Endothelial cell of umbilical vein (primary cell): ENCODE measurements at regions of chr1 and their contacts with region 1.

Region 1: GRCh38 chr1:207797229-207797961 is 45.5 kb downstream of the CD46 start:
- DNase-seq: peak; percentile 91
- H3K4me3 ChIP-seq: no peak overlapping the region
- H3K27ac ChIP-seq: peak overlapping the region; percentile 49
- H3K4me1 ChIP-seq: peaks cover 4% of the 10 kb centered on the region
- H3K27me3 ChIP-seq: no peaks in the 10 kb centered on the region
- CTCF ChIP-seq: peak; percentile 71 to 72
- POLR2A ChIP-seq: peak; percentile 40

Region 2: DNA sequence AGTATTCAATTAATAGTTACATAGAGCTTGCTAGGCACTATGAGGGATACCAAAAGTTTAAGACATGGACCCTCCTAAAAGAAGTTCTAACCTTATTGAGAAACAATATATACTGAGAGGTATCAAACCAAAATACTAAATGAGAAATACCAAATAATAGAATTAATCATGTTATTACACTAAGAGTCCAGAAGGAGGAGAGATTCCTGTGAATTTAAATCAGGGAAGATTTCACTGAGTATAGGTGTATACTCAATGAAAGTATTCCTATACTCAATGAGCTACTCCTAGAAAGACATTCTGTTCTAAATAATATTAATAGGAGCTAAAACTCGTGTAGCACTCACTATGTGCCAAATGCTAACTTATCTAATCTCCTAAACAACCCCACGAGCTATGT is 143.1 kb before region 1 on chr1:
- CTCF ChIA-PET with region 1: interaction called, 15 read pairs
- POLR2A ChIA-PET with region 1: no interaction called
- dilution Hi-C with region 1: no loop called
- intact Hi-C with region 1: loop called (anchors 2 kb)
- DNase-seq: peak; percentile 6
- H3K4me3 ChIP-seq: no peak overlapping the region
- H3K27ac ChIP-seq: no peak overlapping the region
- H3K4me1 ChIP-seq: no peaks in the 10 kb centered on the region
- H3K27me3 ChIP-seq: peaks cover 7 to 19% of the 10 kb centered on the region in 2 experiments
- CTCF ChIP-seq: no peak
- POLR2A ChIP-seq: no peak

Region 3: DNA sequence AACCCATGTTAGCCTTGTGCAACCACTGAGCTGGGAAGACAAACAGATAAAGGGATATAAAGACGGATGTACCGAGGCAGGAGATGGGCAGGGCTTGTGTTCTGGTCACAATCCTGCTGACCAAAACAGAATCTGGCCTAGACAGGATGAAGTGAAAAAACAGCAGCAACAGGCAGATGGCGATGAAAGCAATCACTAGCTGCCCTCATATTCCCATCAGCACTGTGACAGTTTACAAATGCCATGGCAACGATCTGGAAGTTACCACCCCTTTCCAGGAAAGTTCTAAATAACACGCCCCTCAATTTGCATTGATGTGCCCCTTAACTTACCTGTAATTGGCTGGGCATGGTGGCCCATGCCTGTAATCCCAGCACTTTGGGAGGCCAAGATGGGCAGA is 86.1 kb before region 1 on chr1:
- CTCF ChIA-PET with region 1: interaction called, 18 read pairs
- POLR2A ChIA-PET with region 1: no interaction called
- dilution Hi-C with region 1: no loop called
- intact Hi-C with region 1: loop called (anchors 1 kb)
- DNase-seq: peak; percentile 14
- H3K4me3 ChIP-seq: no peak overlapping the region
- H3K27ac ChIP-seq: no peak overlapping the region
- H3K4me1 ChIP-seq: no peaks in the 10 kb centered on the region
- H3K27me3 ChIP-seq: peaks cover 0 to 2% of the 10 kb centered on the region in 2 experiments
- CTCF ChIP-seq: no peak
- POLR2A ChIP-seq: no peak

Region 4: GRCh38 chr1:207818971-207819451 is 21.6 kb after region 1 on chr1:
- CTCF ChIA-PET with region 1: interaction called, 29 read pairs
- POLR2A ChIA-PET with region 1: no interaction called
- dilution Hi-C with region 1: no loop called
- intact Hi-C with region 1: no loop called
- DNase-seq: peak; percentile 77
- H3K4me3 ChIP-seq: no peak overlapping the region
- H3K27ac ChIP-seq: peak overlapping the region; percentile 70
- H3K4me1 ChIP-seq: peaks cover 31% of the 10 kb centered on the region
- H3K27me3 ChIP-seq: no peaks in the 10 kb centered on the region
- CTCF ChIP-seq: no peak
- POLR2A ChIP-seq: no peak